Calu3 (cell line): ENCODE measurements at regions of chr15 and their contacts with region 1.

Region 1: GRCh38 chr15:80418892-80419537 is 14.8 kb downstream of the ARNT2 start:
- DNase-seq: peak; percentile 45
- H3K4me3 Mint-ChIP-seq: no peak overlapping the region
- H3K27ac Mint-ChIP-seq: peak overlapping the region; percentile 41
- H3K4me1 Mint-ChIP-seq: peaks cover 41% of the 10 kb centered on the region
- H3K27me3 Mint-ChIP-seq: peaks cover 8% of the 10 kb centered on the region
- CTCF ChIP-seq: peak; percentile 52

Region 2: DNA sequence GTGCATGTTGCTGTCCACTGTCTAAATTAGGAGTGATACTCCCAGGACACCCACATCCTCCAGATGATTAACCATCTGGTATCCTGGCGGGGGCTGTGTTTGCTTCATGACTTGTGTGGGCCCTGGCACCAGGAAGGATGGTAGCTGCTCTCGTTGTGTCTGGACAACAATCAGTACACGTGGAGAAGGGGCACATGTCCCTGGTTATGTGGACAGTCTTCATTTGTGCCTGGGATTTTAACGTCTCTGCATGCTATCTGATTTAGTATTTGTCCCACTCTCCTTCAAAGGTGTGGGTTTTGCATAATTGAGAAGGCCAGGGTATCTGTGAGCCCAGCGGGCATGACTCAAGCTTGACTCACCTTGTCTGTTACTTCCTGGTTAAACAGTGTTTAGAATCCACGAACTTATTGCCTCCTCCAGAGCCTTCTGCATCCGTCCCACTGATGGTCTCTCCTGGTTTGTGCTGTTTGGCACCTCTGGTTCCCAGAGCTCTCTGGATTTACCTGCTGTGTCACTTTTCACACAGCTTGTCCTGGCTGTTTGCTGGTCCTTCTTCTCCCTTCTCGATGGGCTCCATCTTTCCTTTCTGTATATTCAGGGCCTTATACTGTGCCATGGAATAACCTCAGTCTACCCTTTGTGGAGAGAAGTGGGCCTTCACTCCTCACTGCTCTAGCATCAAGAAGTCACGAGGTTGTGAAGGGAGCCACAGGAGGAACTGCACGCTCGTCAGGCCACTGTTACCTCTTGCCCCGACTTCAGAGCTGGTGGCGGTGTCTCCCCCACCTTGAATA is 17.7 kb after region 1 on chr15:
- CTCF ChIA-PET with region 1: interaction called, 8 read pairs
- intact Hi-C with region 1: loop called (anchors 2 kb)
- DNase-seq: peak; percentile 80
- H3K4me3 Mint-ChIP-seq: no peak overlapping the region
- H3K27ac Mint-ChIP-seq: peak overlapping the region; percentile 72
- H3K4me1 Mint-ChIP-seq: peaks cover 40% of the 10 kb centered on the region
- H3K27me3 Mint-ChIP-seq: no peaks in the 10 kb centered on the region
- CTCF ChIP-seq: no peak

Region 3: GRCh38 chr15:80512726-80513660 is 94.0 kb after region 1 on chr15:
- CTCF ChIA-PET with region 1: no interaction called
- intact Hi-C with region 1: loop called (anchors 1 kb)
- DNase-seq: peak; percentile 41
- H3K4me3 Mint-ChIP-seq: no peak overlapping the region
- H3K27ac Mint-ChIP-seq: no peak overlapping the region
- H3K4me1 Mint-ChIP-seq: no peaks in the 10 kb centered on the region
- H3K27me3 Mint-ChIP-seq: no peaks in the 10 kb centered on the region
- CTCF ChIP-seq: no peak